ENCODE measurements at regions of chr16 and their contacts with region 1.

Region 1: DNA sequence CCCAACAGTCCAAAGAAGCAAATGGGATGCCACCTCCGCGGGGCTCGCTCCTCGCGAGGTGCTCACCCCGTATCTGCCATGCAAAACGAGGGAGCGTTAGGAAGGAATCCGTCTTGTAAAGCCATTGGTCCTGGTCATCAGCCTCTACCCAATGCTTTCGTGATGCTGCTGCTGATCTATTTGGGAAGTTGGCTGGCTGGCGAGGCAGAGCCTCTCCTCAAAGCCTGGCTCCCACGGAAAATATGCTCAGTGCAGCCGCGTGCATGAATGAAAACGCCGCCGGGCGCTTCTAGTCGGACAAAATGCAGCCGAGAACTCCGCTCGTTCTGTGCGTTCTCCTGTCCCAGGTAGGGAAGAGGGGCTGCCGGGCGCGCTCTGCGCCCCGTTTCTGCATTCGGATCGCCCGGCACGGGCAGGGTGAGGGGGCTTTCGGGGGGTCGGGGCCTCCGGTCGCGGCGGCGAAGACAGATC is at the start of gene CDH13:
- DNase-seq: peak; percentile 73
- H3K4me3 ChIP-seq: peak within 1 kb of the TSS; percentile 69 to 83 (median 77)
- H3K27ac ChIP-seq: peak within 1 kb of the TSS; percentile 99
- H3K4me1 ChIP-seq: peaks cover 34% of the 10 kb centered on the region
- H3K27me3 ChIP-seq: no peaks in the 10 kb centered on the region
- CTCF ChIP-seq: no peak
- total RNA-seq, gene CDH13: 141 to 157 TPM

Region 2: GRCh38 chr16:82439671-82440293 is 187.0 kb before region 1 on chr16:
- CTCF ChIA-PET with region 1: no interaction called
- dilution Hi-C with region 1: no loop called
- in situ Hi-C with region 1: no loop called
- intact Hi-C with region 1: no loop called
- DNase-seq: no peak
- H3K4me3 ChIP-seq: no peak overlapping the region
- H3K27ac ChIP-seq: no peak overlapping the region
- H3K4me1 ChIP-seq: no peaks in the 10 kb centered on the region
- H3K27me3 ChIP-seq: peaks cover 4% of the 10 kb centered on the region
- CTCF ChIP-seq: peak; percentile 54 to 57

Region 3: DNA sequence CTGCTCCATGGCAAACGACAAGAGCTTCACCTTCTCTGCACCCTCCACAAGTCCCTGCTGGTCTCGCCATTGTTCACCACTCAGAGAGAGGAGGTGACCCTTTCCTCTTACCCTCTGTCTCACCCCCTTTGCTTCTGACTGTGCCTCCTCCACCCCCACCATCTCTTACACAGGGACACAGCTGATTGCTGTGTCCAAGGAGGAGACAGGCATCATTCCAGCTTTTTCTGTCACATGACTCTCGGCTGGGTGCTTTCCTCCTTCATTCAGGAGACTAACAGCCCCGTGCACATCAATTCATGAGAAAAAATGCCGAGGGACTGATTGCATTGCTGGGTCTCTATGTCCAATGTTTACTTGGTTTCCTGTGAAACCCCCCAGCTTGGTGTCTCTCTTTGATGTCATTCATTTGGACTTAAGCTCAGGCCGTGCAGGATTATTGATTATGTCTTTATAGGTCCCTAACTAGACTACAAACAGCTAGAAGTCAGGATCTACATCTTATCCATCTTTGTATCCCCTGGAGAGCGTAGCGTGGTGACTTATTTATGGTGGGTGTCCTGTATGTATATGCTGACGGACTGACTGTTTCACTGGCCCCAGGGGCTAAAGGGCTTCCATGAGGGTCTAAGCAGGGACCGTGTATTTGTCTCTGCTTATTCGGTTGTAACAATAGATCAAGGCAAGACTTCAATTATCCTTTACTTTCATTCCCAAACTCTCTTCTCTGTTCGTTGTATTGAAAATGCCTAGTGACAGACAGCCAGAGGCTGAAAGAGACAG is 82.3 kb before region 1 on chr16:
- CTCF ChIA-PET with region 1: no interaction called
- dilution Hi-C with region 1: no loop called
- in situ Hi-C with region 1: no loop called
- intact Hi-C with region 1: no loop called
- DNase-seq: no peak
- H3K4me3 ChIP-seq: no peak overlapping the region
- H3K27ac ChIP-seq: no peak overlapping the region
- H3K4me1 ChIP-seq: no peaks in the 10 kb centered on the region
- H3K27me3 ChIP-seq: peaks cover 22% of the 10 kb centered on the region
- CTCF ChIP-seq: no peak

Region 4: GRCh38 chr16:82580298-82580890 is 46.4 kb before region 1 on chr16:
- CTCF ChIA-PET with region 1: no interaction called
- dilution Hi-C with region 1: no loop called
- in situ Hi-C with region 1: no loop called
- intact Hi-C with region 1: no loop called
- DNase-seq: peak; percentile 8
- H3K4me3 ChIP-seq: no peak overlapping the region
- H3K27ac ChIP-seq: no peak overlapping the region
- H3K4me1 ChIP-seq: no peaks in the 10 kb centered on the region
- H3K27me3 ChIP-seq: no peaks in the 10 kb centered on the region
- CTCF ChIP-seq: peak; percentile 51 to 54

Region 5: DNA sequence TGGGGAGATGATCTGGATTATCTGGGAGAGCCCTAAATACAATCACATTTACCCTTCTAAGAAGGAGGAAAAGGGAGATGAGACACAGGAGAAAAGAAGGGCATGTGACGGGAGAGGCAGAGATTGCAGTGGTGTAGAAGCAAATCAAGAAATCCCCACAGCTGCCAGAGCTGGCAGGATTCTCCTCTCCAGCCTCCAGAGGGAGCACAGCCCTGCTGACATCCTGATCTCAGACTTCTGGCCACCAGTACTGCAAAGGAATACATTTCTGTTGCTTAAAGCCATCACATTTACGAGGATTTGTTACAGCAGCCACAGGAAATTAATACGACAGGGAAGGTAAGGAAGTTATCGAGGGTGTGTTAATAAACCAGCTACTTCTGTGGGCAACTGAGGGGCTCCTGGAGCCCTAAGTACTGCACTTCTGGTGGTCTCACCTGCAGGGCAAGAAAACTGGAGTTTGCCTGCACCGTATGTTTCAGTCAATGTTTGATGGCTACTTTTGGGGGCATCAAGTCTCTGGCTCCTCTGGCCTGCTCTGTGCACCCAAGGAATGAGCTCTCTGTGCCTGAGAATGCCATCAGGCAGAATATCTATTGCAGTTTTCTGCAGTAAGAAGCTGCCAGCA is 22.9 kb before region 1 on chr16:
- CTCF ChIA-PET with region 1: interaction called, 4 read pairs
- dilution Hi-C with region 1: no loop called
- in situ Hi-C with region 1: no loop called
- intact Hi-C with region 1: loop called (anchors 2 kb)
- DNase-seq: peak; percentile 62
- H3K4me3 ChIP-seq: no peak overlapping the region
- H3K27ac ChIP-seq: no peak overlapping the region
- H3K4me1 ChIP-seq: no peaks in the 10 kb centered on the region
- H3K27me3 ChIP-seq: no peaks in the 10 kb centered on the region
- CTCF ChIP-seq: peak; percentile 54 to 83

Region 6: GRCh38 chr16:82699711-82700495 is 73.1 kb after region 1 on chr16:
- CTCF ChIA-PET with region 1: no interaction called
- dilution Hi-C with region 1: no loop called
- in situ Hi-C with region 1: no loop called
- intact Hi-C with region 1: loop called (anchors 2 kb)
- DNase-seq: peak; percentile 70
- H3K4me3 ChIP-seq: no peak overlapping the region
- H3K27ac ChIP-seq: peak overlapping the region; percentile 88
- H3K4me1 ChIP-seq: peaks cover 22% of the 10 kb centered on the region
- H3K27me3 ChIP-seq: no peaks in the 10 kb centered on the region
- CTCF ChIP-seq: no peak

Region 7: GRCh38 chr16:82761236-82761635 is 134.4 kb after region 1 on chr16:
- CTCF ChIA-PET with region 1: interaction called, 4 read pairs
- dilution Hi-C with region 1: no loop called
- in situ Hi-C with region 1: no loop called
- intact Hi-C with region 1: loop called (anchors 5 kb)
- DNase-seq: peak; percentile 70
- H3K4me3 ChIP-seq: peak overlapping the region in 2 of 3 experiments; percentile 28 to 40
- H3K27ac ChIP-seq: peak overlapping the region; percentile 57
- H3K4me1 ChIP-seq: peaks cover 25% of the 10 kb centered on the region
- H3K27me3 ChIP-seq: no peaks in the 10 kb centered on the region
- CTCF ChIP-seq: no peak

Region 8: DNA sequence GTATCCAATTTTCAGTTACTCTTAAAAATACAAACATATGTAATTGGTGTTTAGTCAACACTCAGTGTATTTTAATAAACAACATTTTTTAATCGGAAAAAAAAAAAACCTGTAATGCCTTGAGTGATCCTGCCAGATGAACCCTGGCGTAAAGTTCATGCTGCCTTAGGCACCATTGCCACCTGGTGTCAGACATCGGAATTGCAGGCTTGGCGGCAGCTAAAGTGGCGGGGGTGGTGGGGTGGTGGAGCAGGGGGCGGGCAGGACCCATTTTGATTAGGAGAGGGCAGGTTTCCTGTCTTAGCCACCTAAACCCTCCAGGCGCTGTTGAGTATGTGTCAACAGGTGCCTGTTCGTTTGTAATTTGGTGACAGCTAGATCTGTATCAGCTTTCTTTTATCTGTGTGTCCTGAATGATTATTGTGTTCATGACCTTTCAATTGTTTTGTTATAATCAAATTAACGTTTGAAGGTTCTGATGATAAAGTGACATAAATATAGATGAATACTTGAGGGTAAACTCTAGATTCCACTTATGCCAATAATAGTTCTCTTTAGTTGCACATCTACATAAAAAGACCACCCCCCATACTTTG is 588.7 kb after region 1 on chr16:
- CTCF ChIA-PET with region 1: no interaction called
- dilution Hi-C with region 1: no loop called
- in situ Hi-C with region 1: loop called in 1 of 2 experiments (anchors 25 kb)
- intact Hi-C with region 1: loop called (anchors 1 kb)
- DNase-seq: peak; percentile 24
- H3K4me3 ChIP-seq: no peak overlapping the region
- H3K27ac ChIP-seq: no peak overlapping the region
- H3K4me1 ChIP-seq: no peaks in the 10 kb centered on the region
- H3K27me3 ChIP-seq: no peaks in the 10 kb centered on the region
- CTCF ChIP-seq: peak; percentile 79 to 83

Measured in mammary epithelial cell (primary cell).